ENCODE measurements at regions of chr7 and their contacts with region 1.

Region 1: GRCh38 chr7:137948469-137949330 is 53.2 kb downstream of the CREB3L2 start:
- DNase-seq: no peak
- H3K4me3 ChIP-seq: no peak overlapping the region
- H3K27ac ChIP-seq: no peak overlapping the region
- H3K4me1 ChIP-seq: peaks cover 12% of the 10 kb centered on the region
- H3K27me3 ChIP-seq: no peaks in the 10 kb centered on the region
- CTCF ChIP-seq: no peak
- EP300 ChIP-seq: no peak
- POLR2A ChIP-seq: no peak

Region 2: DNA sequence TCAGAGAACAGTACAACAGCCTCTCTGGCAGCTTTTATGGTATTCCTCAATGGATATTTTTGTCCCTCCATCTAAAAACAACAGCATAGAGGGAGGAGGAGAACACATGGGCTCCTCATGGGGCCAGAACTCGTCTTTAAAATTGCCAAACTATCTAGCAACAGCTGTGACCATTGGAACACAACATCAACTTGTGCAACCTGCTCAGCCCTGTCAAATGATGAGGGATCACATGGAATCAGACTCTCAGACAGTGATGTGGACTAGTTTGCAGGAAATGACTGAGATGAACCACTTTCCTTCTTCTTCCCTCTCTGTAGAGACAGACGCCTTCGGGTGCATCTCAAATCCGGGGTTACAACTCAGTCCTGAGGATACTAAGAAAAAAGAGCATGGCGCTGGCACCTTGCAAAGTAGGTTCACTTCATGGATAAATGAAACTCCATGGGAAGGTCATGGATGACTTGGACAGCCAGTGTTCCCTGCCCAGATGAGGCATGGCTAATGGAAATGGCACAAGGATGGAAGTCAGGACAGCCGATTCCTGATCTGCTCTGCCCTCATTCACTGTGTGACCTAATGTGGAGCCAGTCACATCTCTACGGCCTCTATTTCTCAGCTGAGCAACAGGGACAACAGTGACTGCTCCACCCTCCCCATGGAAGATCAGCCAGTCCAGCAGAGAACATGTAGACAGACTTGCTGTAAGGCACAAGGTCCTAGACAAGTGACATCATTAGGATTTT is 77.4 kb before region 1 on chr7:
- intact Hi-C with region 1: no loop called
- DNase-seq: no peak
- H3K4me3 ChIP-seq: no peak overlapping the region
- H3K27ac ChIP-seq: no peak overlapping the region
- H3K4me1 ChIP-seq: peaks cover 11% of the 10 kb centered on the region
- H3K27me3 ChIP-seq: no peaks in the 10 kb centered on the region
- CTCF ChIP-seq: no peak
- EP300 ChIP-seq: no peak
- POLR2A ChIP-seq: no peak

Region 3: GRCh38 chr7:137981670-137982069 is 33.0 kb after region 1 on chr7:
- intact Hi-C with region 1: loop called in 1 of 4 experiments (anchors 5 kb)
- DNase-seq: no peak
- H3K4me3 ChIP-seq: no peak overlapping the region
- H3K27ac ChIP-seq: peak overlapping the region in 1 of 2 donors; percentile 21
- H3K4me1 ChIP-seq: peaks cover 27% of the 10 kb centered on the region
- H3K27me3 ChIP-seq: no peaks in the 10 kb centered on the region
- CTCF ChIP-seq: no peak
- EP300 ChIP-seq: no peak
- POLR2A ChIP-seq: no peak

Region 4: GRCh38 chr7:138064856-138065357 is 116.2 kb after region 1 on chr7:
- intact Hi-C with region 1: no loop called
- DNase-seq: no peak
- H3K4me3 ChIP-seq: no peak overlapping the region
- H3K27ac ChIP-seq: no peak overlapping the region
- H3K4me1 ChIP-seq: no peaks in the 10 kb centered on the region
- H3K27me3 ChIP-seq: no peaks in the 10 kb centered on the region
- CTCF ChIP-seq: no peak
- EP300 ChIP-seq: no peak
- POLR2A ChIP-seq: no peak

Region 5: GRCh38 chr7:138238734-138239659 is 290.3 kb after region 1 on chr7:
- intact Hi-C with region 1: no loop called
- DNase-seq: no peak
- H3K4me3 ChIP-seq: no peak overlapping the region
- H3K27ac ChIP-seq: no peak overlapping the region
- H3K4me1 ChIP-seq: peaks cover 4% of the 10 kb centered on the region
- H3K27me3 ChIP-seq: no peaks in the 10 kb centered on the region
- CTCF ChIP-seq: no peak
- EP300 ChIP-seq: no peak
- POLR2A ChIP-seq: no peak

Region 6: GRCh38 chr7:138303943-138304495 is 355.3 kb after region 1 on chr7:
- intact Hi-C with region 1: no loop called
- DNase-seq: no peak
- H3K4me3 ChIP-seq: no peak overlapping the region
- H3K27ac ChIP-seq: no peak overlapping the region
- H3K4me1 ChIP-seq: no peaks in the 10 kb centered on the region
- H3K27me3 ChIP-seq: no peaks in the 10 kb centered on the region
- CTCF ChIP-seq: no peak
- EP300 ChIP-seq: no peak
- POLR2A ChIP-seq: no peak